Activated B cell treated with CpG ODN at 0.5 μM for 24 hours (primary cell): ENCODE measurements at regions of chr12 and their contacts with region 1.

Region 1: DNA sequence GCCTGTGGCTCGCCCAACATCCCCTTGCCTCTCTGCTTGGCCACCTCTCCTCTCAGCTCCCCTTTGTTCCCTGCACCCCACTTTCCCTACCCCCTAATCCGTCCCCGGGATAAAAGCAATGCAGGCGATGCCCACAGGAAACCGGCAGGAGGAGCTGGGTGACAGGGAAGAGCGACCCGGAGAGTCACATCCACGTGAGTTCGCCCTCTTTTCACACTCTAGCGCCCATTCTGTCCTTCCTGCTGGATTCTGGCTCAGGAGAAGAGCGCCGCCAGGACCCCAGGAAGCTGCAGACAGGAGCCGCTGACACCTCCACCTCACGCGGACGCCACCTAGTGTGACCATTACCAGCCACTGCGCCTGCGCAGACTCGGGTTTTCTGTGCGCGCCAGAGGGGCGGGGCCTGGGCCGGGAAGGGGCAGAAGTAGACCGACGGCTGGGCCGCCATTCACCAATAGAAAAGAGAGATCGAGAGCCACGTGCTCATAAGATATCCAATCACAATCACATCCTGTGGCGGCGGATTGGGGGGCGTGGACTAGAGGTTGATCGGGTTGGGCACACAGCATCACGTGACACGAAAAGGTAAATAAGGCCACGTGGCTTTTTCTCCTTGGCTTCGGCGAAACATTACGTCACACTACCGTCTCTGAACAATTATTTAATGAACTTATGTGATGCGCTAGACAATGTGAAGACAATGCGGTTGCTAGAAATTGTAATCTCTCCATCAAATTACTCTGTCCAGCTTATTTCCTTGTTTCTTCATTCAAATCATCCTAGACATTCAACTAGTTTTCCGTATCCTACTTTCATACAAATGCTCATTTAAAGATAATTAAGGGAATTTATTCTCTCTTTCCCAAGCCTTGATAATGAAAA is 10.1 kb downstream of the PLA2G1B start:
- DNase-seq: peak; percentile 100
- ATAC-seq: peak; percentile 99
- H3K4me3 Mint-ChIP-seq: peak overlapping the region; percentile 88
- H3K27ac Mint-ChIP-seq: peak overlapping the region; percentile 90
- H3K4me1 Mint-ChIP-seq: peaks cover 13% of the 10 kb centered on the region
- H3K27me3 Mint-ChIP-seq: peaks cover 1% of the 10 kb centered on the region
- CTCF ChIP-seq: no peak

Region 2: GRCh38 chr12:120156315-120157259 is 160.9 kb before region 1 on chr12:
- CTCF ChIA-PET with region 1: no interaction called
- POLR2A ChIA-PET with region 1: no interaction called
- intact Hi-C with region 1: no loop called
- DNase-seq: no peak
- ATAC-seq: no peak
- H3K4me3 Mint-ChIP-seq: no peak overlapping the region
- H3K27ac Mint-ChIP-seq: no peak overlapping the region
- H3K4me1 Mint-ChIP-seq: no peaks in the 10 kb centered on the region
- H3K27me3 Mint-ChIP-seq: no peaks in the 10 kb centered on the region
- CTCF ChIP-seq: no peak

Region 3: DNA sequence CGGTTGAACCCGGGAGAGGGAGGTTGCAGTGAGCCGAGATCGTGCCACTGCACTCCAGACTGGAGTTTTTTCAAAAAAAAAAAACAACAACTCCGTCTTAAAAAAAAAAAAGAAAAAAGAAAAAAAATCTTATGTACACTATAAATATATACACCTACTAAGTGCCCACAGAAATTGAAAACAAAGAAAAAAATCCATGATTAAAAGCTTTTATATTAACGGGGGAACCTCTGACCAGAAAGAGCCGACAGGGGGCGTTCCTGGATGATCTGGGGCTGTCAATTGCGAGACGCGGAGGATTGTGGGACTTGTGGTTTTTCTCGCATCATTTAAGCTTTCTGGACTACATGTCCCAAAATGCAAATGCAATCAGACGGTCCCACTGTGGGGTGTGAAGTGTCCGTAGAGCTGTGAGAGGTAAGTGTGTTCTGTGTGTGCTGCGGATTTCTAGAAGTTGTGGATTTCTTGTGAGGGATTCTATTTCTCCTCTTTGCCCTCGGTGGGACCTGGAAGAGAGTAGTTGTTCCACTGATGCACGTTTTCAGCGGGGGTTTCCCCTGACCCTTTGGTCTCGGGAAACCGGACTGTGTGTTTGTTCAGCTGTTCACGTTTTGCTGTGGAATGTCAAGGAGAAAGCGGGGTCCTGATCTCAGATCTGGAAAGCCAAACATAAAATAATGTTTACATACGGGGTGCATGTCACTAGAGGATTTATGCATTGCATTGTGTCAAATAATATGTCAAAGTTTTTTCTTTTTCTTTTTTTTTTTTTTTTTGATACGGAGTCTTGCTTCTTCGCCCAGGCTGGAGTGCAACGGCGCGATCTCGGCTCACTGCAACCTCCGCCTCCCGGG is 15.3 kb before region 1 on chr12 and contains the start of gene SIRT4:
- CTCF ChIA-PET with region 1: interaction called, 12 read pairs
- POLR2A ChIA-PET with region 1: interaction called, 16 read pairs
- intact Hi-C with region 1: loop called (anchors 1 kb)
- DNase-seq: peak; percentile 71
- ATAC-seq: peak; percentile 99
- H3K4me3 Mint-ChIP-seq: peak within 1 kb of the TSS; percentile 95
- H3K27ac Mint-ChIP-seq: peak within 1 kb of the TSS; percentile 86
- H3K4me1 Mint-ChIP-seq: peaks cover 8% of the 10 kb centered on the region
- H3K27me3 Mint-ChIP-seq: no peaks in the 10 kb centered on the region
- CTCF ChIP-seq: no peak
- total RNA-seq, gene SIRT4: 1.6 and 1.7 TPM in 2 replicates

Region 4: DNA sequence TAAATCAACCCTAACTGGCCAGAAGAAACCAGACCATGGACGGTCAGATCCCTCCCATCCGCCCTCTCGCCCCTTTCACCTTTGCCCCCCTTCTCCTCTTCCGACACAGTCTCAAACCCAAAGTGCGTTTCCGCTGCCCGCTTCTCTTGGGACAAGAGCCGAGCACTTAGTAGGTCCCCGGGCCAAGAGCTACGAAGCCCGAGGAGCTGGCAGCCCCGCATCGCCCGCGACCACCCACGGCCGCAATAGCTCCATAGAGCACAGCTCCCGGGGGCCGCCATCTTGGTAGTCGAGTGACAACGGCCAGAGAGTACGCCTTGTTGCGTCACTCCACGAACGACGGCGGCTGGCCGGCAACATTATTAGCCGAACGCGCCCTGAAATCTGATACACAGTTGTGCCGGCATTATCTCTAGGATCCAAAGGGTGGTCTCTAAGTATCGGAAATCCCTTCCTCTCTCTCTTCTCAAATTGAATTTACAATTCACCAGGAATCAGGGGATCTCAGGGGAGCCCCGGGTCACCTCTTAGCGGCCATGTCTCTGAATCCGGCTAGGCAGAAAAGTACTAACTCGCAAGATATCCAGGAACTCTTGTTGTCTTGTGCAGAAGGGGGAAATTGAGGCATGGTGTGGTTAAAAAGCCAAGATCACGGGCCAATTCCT is 211.5 kb after region 1 on chr12 and contains the start of gene COQ5:
- CTCF ChIA-PET with region 1: no interaction called
- POLR2A ChIA-PET with region 1: no interaction called
- intact Hi-C with region 1: loop called (anchors 5 kb)
- DNase-seq: peak; percentile 76
- ATAC-seq: peak; percentile 96
- H3K4me3 Mint-ChIP-seq: peak within 1 kb of the TSS; percentile 100
- H3K27ac Mint-ChIP-seq: peak within 1 kb of the TSS; percentile 99
- H3K4me1 Mint-ChIP-seq: peaks cover 29% of the 10 kb centered on the region
- H3K27me3 Mint-ChIP-seq: no peaks in the 10 kb centered on the region
- CTCF ChIP-seq: no peak
- total RNA-seq, gene COQ5: 25.3 and 29.5 TPM in 2 replicates